Dendritic cell treated with granulocyte-macrophage colony-stimulating factor and Interleukin-4, amounts not matched to agents 40 ng/mL and 50 ng/mL, for 4 days (primary cell): ENCODE measurements at regions of chr19 and their contacts with region 1.

Region 1: GRCh38 chr19:17292286-17293097 is 10.7 kb downstream of the ABHD8 start:
- H3K4me3 Mint-ChIP-seq: peak overlapping the region; percentile 77
- H3K27ac Mint-ChIP-seq: peak overlapping the region; percentile 77
- H3K4me1 Mint-ChIP-seq: peaks cover 17% of the 10 kb centered on the region
- H3K27me3 Mint-ChIP-seq: peaks cover 9% of the 10 kb centered on the region

Region 2: GRCh38 chr19:17235618-17236377 is 56.7 kb before region 1 on chr19:
- intact Hi-C with region 1: no loop called
- H3K4me3 Mint-ChIP-seq: peak overlapping the region; percentile 78
- H3K27ac Mint-ChIP-seq: peak overlapping the region; percentile 30
- H3K4me1 Mint-ChIP-seq: peaks cover 35% of the 10 kb centered on the region
- H3K27me3 Mint-ChIP-seq: no peaks in the 10 kb centered on the region

Region 3: DNA sequence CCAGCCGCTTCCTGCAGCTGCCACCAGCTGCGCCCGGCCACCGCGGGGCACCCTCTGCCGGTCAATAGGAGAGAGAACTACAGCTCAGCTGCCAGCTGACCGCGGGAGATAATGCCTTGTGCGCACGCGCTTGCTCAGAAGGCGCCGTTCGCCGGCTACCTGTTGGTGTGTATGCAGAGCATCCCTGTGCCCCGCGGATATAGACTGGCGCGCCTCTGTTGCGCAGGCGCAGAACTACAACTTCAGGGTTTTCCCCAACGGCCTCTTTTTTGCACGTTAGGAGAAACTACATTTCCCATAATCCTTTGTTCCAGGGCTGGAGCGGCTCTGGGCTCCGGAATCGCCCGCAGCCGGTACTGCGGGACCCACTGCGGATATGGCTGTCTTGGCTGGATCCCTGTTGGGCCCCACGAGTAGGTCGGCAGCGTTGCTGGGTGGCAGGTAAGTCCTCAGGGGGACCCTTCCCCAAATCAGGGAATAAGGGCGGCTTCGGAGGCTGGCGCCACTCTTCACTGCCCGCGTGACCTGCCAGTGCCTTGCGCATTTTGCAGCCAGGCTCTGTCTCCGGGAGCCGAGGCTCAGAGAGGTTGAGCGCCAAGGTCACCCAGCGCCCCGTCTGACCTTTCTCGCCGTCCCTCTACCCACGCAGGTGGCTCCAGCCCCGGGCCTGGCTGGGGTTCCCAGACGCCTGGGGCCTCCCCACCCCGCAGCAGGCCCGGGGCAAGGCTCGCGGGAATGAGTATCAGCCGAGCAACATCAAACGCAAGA is 13.2 kb after region 1 on chr19 and contains the start of gene MRPL34:
- intact Hi-C with region 1: loop called (anchors 1 kb)
- H3K4me3 Mint-ChIP-seq: peak within 1 kb of the TSS; percentile 85
- H3K27ac Mint-ChIP-seq: peak within 1 kb of the TSS; percentile 92
- H3K4me1 Mint-ChIP-seq: peaks cover 60% of the 10 kb centered on the region
- H3K27me3 Mint-ChIP-seq: no peaks in the 10 kb centered on the region

Region 4: GRCh38 chr19:17336872-17337722 is 44.6 kb after region 1 on chr19 and contains the start of gene GTPBP3:
- intact Hi-C with region 1: loop called (anchors 2 kb)
- H3K4me3 Mint-ChIP-seq: peak within 1 kb of the TSS; percentile 97
- H3K27ac Mint-ChIP-seq: peak within 1 kb of the TSS; percentile 99
- H3K4me1 Mint-ChIP-seq: peaks cover 65% of the 10 kb centered on the region
- H3K27me3 Mint-ChIP-seq: no peaks in the 10 kb centered on the region

Region 5: GRCh38 chr19:17346109-17346671 is 53.7 kb after region 1 on chr19:
- intact Hi-C with region 1: loop called (anchors 2 kb)
- H3K4me3 Mint-ChIP-seq: no peak overlapping the region
- H3K27ac Mint-ChIP-seq: no peak overlapping the region
- H3K4me1 Mint-ChIP-seq: peaks cover 27% of the 10 kb centered on the region
- H3K27me3 Mint-ChIP-seq: peaks cover 39% of the 10 kb centered on the region

Region 6: DNA sequence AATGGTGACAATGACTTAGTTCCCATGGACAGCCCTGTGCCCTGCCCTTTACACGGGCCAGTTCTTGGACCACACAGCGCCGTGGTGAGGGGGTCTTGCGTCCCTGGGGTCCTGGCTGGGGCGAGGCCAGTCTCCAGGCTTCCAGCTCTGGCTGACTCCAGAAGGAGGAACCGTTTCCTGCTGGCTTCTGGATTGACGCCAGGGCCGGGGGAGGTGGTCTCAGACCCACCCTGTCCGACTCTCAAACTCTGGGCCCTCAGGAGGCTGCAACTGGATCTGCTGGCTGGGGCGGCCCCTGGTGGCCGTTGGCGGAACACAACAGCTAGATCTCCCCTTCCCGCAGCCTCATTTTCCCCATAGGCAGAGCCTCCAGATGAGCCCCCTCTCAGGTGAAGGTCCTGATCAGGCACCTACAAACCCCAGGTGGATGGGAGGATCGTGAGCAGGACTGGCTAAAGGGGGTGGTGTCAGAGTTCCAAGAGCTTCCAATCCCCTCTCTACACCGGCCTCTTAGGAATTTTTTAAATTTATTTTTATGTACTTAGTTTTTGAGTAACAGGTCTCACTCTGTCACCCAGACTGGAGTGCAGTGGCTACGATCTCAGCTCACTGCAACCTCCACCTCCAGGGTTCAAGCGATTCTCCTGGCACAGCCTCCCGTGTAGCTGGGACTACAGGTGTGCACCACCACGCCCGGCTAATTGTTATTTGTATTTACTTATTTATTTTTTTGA is 93.6 kb after region 1 on chr19:
- intact Hi-C with region 1: loop called (anchors 2 kb)
- H3K4me3 Mint-ChIP-seq: no peak overlapping the region
- H3K27ac Mint-ChIP-seq: no peak overlapping the region
- H3K4me1 Mint-ChIP-seq: peaks cover 18% of the 10 kb centered on the region
- H3K27me3 Mint-ChIP-seq: peaks cover 24% of the 10 kb centered on the region